Natural killer cell (primary cell): ENCODE measurements at regions of chr5 and their contacts with region 1.

Region 1: GRCh38 chr5:138482638-138483037 is 17.4 kb downstream of the EGR1 start:
- DNase-seq: no peak
- ATAC-seq: no peak
- H3K4me3 ChIP-seq: no peak overlapping the region
- H3K4me3 Mint-ChIP-seq: no peak overlapping the region
- H3K27ac ChIP-seq: no peak overlapping the region
- H3K27ac Mint-ChIP-seq: no peak overlapping the region
- H3K4me1 ChIP-seq: no peaks in the 10 kb centered on the region
- H3K4me1 Mint-ChIP-seq: no peaks in the 10 kb centered on the region
- H3K27me3 ChIP-seq: no peaks in the 10 kb centered on the region
- H3K27me3 Mint-ChIP-seq: peaks cover 7 to 11% of the 10 kb centered on the region in 2 donors
- CTCF ChIP-seq: no peak

Region 2: DNA sequence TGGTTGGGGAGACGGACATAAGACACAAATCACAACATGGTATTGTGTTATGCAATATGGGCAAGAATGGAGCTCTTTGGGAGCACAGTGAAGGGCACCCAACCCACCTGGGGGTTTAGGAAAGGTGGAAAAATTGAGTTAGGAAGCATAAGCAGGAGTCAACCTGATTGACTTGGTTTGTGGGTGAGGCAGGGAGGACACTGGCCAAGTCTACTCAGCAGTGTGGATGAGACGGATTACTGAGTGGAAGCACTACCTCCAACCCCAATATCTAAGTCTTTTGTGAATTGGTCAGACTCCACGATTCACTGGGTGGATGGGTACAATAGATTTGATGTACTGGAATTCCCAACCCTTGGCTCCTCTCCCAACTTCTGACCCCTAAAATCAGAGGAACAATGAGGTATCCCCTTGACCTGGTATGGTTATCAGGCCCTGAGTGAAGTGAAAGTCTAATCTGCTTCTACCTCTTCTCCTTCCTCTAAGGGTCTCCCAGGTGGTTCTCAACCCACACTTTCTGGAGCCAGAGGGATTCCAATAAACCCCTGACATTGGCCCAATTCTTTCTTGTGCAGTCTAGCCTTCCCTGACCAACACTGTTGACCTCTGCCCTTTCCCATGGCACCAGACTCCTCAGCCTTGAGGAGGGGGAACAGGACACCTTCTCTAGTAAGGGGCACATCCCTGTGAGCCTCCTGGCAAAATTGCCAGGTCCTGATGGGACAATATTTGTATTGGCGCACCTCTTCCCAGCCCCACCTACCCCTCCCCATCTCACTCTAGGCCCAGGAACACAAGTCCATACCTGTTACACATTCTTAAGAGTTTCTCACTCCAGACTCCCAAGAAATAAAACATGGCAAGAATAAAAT is 12.1 kb before region 1 on chr5:
- intact Hi-C with region 1: loop called (anchors 1 kb)
- DNase-seq: no peak
- ATAC-seq: peak in 1 of 3 donors; percentile 1
- H3K4me3 ChIP-seq: no peak overlapping the region
- H3K4me3 Mint-ChIP-seq: no peak overlapping the region
- H3K27ac ChIP-seq: no peak overlapping the region
- H3K27ac Mint-ChIP-seq: no peak overlapping the region
- H3K4me1 ChIP-seq: peaks cover 16% of the 10 kb centered on the region
- H3K4me1 Mint-ChIP-seq: peaks cover 8 to 22% of the 10 kb centered on the region in 2 donors
- H3K27me3 ChIP-seq: no peaks in the 10 kb centered on the region
- H3K27me3 Mint-ChIP-seq: peaks cover 5 to 6% of the 10 kb centered on the region in 2 donors
- CTCF ChIP-seq: no peak

Region 3: GRCh38 chr5:138975098-138975847 is 492.6 kb after region 1 on chr5:
- intact Hi-C with region 1: no loop called
- DNase-seq: no peak
- ATAC-seq: no peak
- H3K4me3 ChIP-seq: no peak overlapping the region
- H3K4me3 Mint-ChIP-seq: no peak overlapping the region
- H3K27ac ChIP-seq: no peak overlapping the region
- H3K27ac Mint-ChIP-seq: no peak overlapping the region
- H3K4me1 ChIP-seq: peaks cover 10% of the 10 kb centered on the region
- H3K4me1 Mint-ChIP-seq: peaks cover 11 to 22% of the 10 kb centered on the region in 2 donors
- H3K27me3 ChIP-seq: no peaks in the 10 kb centered on the region
- H3K27me3 Mint-ChIP-seq: no peaks in the 10 kb centered on the region
- CTCF ChIP-seq: no peak